Colonic mucosa (tissue), 4 donors: ENCODE measurements at regions of chr11 and their contacts with region 1.

Region 1: DNA sequence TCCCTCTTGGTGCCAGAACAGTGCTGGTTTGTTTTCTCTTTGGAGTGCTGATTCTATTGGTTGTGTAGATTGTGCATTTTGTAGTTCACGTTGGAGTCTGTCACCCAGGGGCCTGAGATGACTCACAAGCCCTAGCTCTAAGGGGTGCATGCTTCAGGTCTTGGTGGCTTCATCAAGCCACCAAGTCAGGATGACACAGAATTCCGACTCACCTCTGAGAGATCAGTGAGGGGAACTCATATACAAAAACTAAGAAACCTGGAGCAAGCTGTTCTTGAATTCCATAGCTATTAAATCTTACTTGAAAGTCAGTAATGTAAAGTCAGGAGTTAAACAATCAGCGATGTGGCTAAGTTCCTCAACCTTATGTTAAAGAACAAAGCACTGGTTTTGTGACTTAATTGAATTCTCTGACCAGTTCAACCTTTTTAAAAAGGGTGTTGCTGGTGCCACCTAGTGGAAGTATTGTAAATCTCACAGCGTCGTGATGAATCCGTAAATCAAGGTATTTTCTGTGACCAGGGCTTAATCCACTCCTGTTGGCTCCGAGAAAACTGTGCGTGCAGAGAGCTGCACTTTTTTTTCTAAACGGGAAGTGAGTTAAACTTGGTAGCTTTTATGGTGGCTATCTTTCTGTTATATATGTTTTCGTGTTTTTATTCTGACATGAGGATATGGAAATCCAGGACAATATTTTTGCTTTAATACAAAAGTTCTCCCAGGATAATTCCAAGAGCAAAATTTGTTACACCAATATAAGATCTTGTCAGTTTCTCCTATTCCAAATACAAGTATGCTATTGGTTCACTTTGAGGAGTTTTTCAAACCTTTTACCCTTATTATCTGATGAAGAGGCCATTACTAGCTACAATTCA is 14.6 kb downstream of the MMP13 start:
- DNase-seq: peak; percentile 63
- H3K4me3 ChIP-seq: no peak overlapping the region
- H3K27ac ChIP-seq: no peak overlapping the region
- H3K4me1 ChIP-seq: no peaks in the 10 kb centered on the region
- H3K27me3 ChIP-seq: no peaks in the 10 kb centered on the region
- CTCF ChIP-seq: peak; percentile 87

Region 2: GRCh38 chr11:102733232-102733875 is 207.6 kb before region 1 on chr11:
- intact Hi-C with region 1: loop called (anchors 5 kb)
- DNase-seq: peak; percentile 82
- H3K4me3 ChIP-seq: no peak overlapping the region
- H3K27ac ChIP-seq: no peak overlapping the region
- H3K4me1 ChIP-seq: no peaks in the 10 kb centered on the region
- H3K27me3 ChIP-seq: no peaks in the 10 kb centered on the region
- CTCF ChIP-seq: peak; percentile 79

Region 3: GRCh38 chr11:102810945-102811660 is 129.8 kb before region 1 on chr11:
- intact Hi-C with region 1: loop called (anchors 5 kb)
- DNase-seq: no peak
- H3K4me3 ChIP-seq: no peak overlapping the region
- H3K27ac ChIP-seq: no peak overlapping the region
- H3K4me1 ChIP-seq: no peaks in the 10 kb centered on the region
- H3K27me3 ChIP-seq: no peaks in the 10 kb centered on the region
- CTCF ChIP-seq: peak; percentile 39

Region 4: DNA sequence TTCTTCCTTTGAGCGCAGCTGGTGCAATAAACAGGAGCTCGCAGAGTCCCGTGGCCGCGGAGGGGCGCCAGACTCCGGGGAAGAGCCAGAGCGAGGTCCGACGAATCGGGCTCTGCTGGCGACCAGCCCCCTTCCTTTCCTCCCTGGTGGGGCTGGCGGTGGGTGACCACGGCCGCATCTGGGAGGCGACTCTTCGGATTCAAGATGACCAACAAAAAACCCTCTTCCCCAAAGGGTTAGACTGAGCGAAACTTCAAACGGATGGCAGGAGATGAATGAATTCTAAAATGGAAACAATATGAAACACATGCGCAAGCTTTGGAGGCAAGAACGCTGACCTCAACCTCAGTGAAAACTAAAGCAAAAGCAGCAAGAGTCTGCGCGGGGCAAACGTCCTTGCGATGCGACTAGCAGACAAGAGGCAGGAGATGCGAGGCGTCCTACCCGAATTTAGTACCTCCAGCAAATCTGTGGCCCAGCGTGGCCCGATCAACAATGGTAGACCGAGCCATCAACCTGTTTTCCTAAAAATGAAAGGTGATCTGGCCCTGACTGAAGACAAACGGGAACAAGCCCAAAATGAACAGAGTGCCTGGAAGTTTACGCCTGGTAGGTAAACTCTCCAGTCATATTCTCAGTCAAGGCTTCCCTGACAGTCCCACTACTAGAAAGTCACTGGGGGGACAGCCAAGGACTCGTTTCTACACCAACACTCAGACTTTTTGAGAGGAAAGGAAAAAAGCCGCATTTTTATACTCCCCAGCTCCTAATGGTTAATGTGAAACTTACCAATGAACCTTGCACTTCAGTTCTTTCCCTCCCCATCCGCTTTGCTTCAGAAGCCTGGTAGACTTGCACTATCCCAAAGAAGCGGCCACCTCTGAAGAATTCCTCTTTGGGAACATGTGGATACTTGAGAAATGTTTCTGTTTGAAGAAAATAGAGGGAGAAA is 109.2 kb before region 1 on chr11:
- intact Hi-C with region 1: loop called (anchors 5 kb)
- DNase-seq: peak; percentile 66
- H3K4me3 ChIP-seq: no peak overlapping the region
- H3K27ac ChIP-seq: no peak overlapping the region
- H3K4me1 ChIP-seq: no peaks in the 10 kb centered on the region
- H3K27me3 ChIP-seq: no peaks in the 10 kb centered on the region
- CTCF ChIP-seq: peak; percentile 42